BJ (cell line): ENCODE measurements at regions of chr1 and their contacts with region 1.

Region 1: DNA sequence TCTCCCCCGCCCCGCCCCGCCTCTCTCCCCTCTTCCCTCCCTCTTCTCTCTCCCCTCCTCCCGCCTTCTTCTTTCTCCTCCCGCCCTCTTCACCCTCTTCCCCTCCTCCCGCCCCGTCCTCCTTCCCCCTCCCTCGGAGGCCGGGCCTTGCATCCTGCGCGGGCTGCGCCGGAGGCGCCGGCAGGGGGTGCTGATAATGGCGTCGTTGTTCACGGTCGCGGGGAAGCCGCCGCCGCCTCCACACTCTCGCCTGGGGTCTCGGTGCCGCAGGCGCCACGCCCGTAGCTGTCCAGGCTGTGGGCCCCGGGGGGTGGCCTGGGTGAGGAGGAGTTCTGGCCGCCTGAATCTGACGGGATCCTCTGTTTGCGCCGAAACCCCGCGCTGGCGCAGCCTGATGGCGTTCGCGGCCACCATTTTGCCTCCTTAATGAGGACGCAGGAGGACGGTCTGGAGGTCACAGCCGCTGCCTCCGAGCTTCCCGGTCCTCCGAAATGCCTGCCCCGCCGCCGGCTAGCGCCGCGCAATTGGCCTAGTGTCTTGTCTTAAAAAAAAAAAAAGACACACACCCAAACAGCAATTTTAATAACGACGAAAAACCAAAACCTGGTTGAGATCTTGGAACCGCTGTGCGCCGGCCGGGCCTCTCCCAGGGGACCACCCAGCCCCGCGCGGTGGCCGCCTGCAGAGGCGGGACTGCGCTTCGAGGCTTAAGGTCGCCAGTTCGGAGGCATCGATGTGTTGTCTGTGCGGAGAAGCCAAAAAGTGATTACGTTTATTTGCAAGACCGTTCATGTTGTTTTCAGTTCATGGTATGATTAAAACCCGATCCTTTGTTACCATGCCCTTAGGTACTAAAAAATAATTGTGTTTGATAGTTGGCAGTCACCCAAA is 106.6 kb upstream of the HNRNPU start:
- DNase-seq: peak; percentile 74
- H3K4me3 ChIP-seq: peak overlapping the region; percentile 75
- H3K27me3 ChIP-seq: no peaks in the 10 kb centered on the region
- CTCF ChIP-seq: peak; percentile 66

Region 2: DNA sequence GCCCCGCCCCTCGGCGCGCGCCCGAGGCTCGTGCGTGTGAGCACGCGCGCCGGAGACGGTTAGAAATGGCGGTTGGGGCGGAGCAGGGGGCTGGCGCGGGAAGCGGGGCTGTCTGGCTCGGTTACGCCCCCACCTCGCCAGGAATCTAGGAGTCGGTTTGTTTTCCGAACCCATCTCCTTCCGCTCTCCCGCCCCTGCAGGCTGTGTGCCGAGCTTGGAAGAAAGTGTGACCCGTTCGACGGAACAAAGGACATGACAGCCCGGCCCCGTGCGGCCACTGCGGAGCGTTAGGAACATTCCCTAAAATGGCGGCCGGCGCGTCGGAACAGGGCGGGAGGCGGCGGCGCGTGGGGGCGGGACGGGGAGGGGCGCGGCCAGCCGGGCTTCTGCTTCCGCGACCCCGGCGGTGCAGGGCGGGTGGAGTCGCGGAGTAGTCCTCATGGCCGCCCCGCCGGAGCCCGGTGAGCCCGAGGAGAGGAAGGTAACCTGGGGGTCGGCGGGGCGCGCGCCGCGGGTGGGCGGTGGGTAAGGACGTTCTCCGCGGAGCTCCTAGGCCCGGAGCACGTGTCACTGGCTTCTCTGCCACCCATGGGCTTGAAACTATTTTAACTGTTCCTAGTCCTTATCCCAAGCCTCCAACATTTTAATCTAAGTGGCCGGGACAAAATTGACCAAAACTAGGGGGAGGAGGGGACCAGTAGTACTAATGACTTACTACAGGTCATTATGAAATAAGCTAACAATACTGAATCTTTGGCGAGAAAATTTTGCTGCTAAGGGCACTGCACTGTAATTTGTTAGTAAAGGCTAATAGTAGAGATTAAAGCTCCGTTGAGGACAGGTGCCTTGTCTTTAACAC is 135.4 kb before region 1 on chr1 and contains the start of gene COX20:
- CTCF ChIA-PET with region 1: no interaction called
- POLR2A ChIA-PET with region 1: interaction called, 12 read pairs
- DNase-seq: peak; percentile 38
- H3K4me3 ChIP-seq: peak within 1 kb of the TSS; percentile 81
- H3K27me3 ChIP-seq: no peaks in the 10 kb centered on the region
- CTCF ChIP-seq: no peak
- polyA plus RNA-seq, gene COX20: 12.1 and 25.7 TPM in 2 replicates

Region 3: DNA sequence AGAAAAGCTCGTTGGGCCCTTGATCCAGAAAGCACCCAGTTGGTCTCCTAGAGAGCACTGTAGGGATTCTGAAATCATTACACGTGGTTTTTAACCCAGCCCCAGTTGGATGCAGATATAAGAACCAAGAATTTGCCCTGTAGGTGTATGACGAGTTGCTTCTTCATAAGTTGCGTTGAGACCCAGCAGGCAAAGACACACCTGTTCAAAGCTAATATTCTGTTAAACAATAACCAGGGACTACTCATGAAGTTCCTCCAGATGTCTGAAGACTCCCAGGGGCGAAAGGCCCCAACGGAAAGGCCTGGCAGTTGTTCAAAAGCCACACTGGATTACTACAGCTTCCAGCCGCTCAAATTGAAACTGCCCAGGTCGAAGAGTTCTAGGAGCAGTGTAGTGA is 18.0 kb before region 1 on chr1:
- CTCF ChIA-PET with region 1: no interaction called
- POLR2A ChIA-PET with region 1: no interaction called
- DNase-seq: no peak
- H3K4me3 ChIP-seq: no peak overlapping the region
- H3K27me3 ChIP-seq: no peaks in the 10 kb centered on the region
- CTCF ChIP-seq: no peak